H1 (cell line): ENCODE measurements at regions of chr16 and their contacts with region 1.

Region 1: DNA sequence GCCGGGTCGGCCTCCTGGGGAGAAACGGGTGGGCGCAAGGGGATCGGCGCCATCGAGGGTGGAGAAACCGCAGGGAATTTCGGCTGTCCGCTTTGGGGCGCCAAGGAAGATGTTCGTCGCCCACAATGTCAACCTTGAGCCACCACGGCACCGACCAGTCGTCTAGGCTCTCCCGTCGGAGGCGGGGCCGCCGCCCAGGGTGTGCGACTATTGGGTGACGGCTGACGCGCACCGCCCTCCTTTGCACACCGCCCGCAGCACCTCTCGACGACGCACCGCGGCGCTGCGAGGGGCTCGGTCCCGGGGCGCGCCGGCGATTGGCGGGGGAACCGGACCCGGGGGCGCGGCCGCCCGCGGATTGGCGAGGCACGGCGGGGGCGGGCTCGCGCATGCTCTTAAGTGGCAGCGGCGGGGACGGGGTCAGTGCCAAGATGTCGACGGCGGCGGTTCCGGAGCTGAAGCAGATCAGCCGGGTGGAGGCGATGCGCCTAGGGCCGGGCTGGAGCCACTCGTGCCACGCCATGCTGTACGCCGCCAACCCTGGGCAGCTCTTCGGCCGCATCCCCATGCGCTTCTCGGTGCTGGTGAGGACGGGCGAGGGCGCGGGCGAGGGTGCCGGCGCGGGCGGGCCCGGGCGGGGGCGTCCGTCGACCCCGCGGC is at the start of gene NUDT16L1:
- DNase-seq: peak; percentile 81 to 96
- H3K4me3 ChIP-seq: peak within 1 kb of the TSS; percentile 72 to 93 (median 76)
- H3K27ac ChIP-seq: peak within 1 kb of the TSS; percentile 50; the same call in 1 of the 2 replicates
- H3K4me1 ChIP-seq: peaks cover 0 to 7% (median 5%) of the 10 kb centered on the region in 4 experiments; a peak in 4 of 7 replicates
- H3K27me3 ChIP-seq: no peaks in the 10 kb centered on the region
- CTCF ChIP-seq: peak in 2 of 3 experiments; percentile 23 to 24; a peak in 2 of 4 replicates
- EP300 ChIP-seq: no peak
- POLR2A ChIP-seq: peak in 1 of 2 experiments; percentile 80; a peak in 2 of 3 replicates
- RAD21 ChIP-seq: no peak; a peak in 1 of 4 replicates
- total RNA-seq, gene NUDT16L1: 34.8 and 41.3 TPM in 2 replicates

Region 2: DNA sequence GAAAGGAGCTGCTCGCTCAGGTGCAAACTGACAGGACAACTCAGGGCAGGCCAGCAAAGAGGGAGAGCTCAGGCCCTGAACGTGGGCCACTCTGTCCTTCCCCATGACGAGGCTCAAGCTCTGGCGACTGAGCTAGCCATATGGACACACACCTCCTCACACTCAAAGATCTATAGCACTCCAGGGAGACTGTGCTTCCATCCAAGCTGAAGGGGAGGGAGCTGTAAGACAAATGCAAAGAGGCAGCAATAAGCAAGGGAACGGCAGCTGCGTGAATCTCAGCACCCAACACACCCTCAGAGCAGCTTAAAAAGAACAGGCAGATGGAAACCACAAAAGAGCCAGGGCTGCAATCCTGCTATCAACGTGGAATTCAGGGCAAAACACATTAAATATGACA is 13.4 kb after region 1 on chr16:
- CTCF ChIA-PET with region 1: interaction called, 9 read pairs
- POLR2A ChIA-PET with region 1: interaction called, 59 read pairs
- DNase-seq: no peak
- H3K4me3 ChIP-seq: no peak overlapping the region
- H3K27ac ChIP-seq: no peak overlapping the region
- H3K4me1 ChIP-seq: no peaks in the 10 kb centered on the region
- H3K27me3 ChIP-seq: no peaks in the 10 kb centered on the region
- CTCF ChIP-seq: no peak
- EP300 ChIP-seq: no peak
- POLR2A ChIP-seq: no peak
- RAD21 ChIP-seq: no peak

Region 3: GRCh38 chr16:4713663-4714501 is 20.5 kb after region 1 on chr16:
- CTCF ChIA-PET with region 1: interaction called, 6 read pairs
- POLR2A ChIA-PET with region 1: interaction called, 10 read pairs
- DNase-seq: no peak
- H3K4me3 ChIP-seq: peak overlapping the region in 2 of 4 experiments; percentile 11 to 19; a peak in 3 of 8 replicates
- H3K27ac ChIP-seq: no peak overlapping the region
- H3K4me1 ChIP-seq: peaks cover under 1 to 16% (median 8%) of the 10 kb centered on the region in 4 experiments
- H3K27me3 ChIP-seq: no peaks in the 10 kb centered on the region
- CTCF ChIP-seq: no peak
- EP300 ChIP-seq: no peak
- POLR2A ChIP-seq: no peak
- RAD21 ChIP-seq: no peak

Region 4: DNA sequence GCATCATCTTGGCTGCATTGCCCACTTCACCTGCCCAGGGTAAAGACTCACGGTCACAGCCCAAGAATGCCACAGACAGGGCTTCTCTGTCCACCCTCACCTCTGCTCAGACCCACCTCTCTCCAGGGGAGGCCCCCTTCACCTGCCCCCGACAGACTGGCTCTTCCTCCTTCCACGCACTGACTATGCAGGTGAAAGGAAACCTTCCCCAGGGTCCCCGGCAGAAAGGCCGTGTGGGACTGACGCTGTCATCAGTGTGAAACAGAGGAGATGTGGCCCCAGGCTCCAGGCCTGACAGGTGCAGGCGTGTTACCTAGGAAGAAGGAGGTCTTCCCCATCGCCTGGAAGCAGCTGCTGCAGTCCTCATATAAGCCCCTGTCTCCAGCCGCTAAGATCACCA is 118.3 kb after region 1 on chr16:
- CTCF ChIA-PET with region 1: no interaction called
- POLR2A ChIA-PET with region 1: no interaction called
- DNase-seq: no peak
- H3K4me3 ChIP-seq: no peak overlapping the region
- H3K27ac ChIP-seq: no peak overlapping the region
- H3K4me1 ChIP-seq: no peaks in the 10 kb centered on the region
- H3K27me3 ChIP-seq: no peaks in the 10 kb centered on the region
- CTCF ChIP-seq: no peak
- EP300 ChIP-seq: no peak
- POLR2A ChIP-seq: no peak
- RAD21 ChIP-seq: no peak